ENCODE measurements at regions of chr20 and their contacts with region 1.

Region 1: GRCh38 chr20:40880063-40880728 is 148.4 kb upstream of the TOP1 start:
- DNase-seq: no peak
- H3K4me3 Mint-ChIP-seq: no peak overlapping the region
- H3K27ac Mint-ChIP-seq: no peak overlapping the region
- H3K4me1 Mint-ChIP-seq: peaks cover 32% of the 10 kb centered on the region
- H3K27me3 Mint-ChIP-seq: peaks cover 4% of the 10 kb centered on the region

Region 2: DNA sequence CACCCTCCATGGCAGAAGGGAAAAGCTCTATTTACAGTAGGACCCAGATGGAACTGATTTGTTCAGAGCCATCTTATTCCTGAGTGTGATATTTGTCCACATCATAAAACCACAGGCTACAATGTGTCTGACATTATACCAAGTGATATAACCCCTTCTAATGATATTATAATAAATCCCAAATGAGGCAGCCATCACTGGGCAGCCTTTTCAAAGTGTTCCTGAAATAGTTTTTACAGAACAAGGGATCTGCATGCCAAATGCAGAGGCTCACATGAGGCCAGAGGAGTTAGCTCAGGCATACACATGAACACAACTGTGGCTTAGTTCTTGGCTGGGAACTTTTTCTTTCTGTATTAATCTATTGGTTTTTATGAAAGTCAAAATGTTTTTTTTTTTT is 398.9 kb before region 1 on chr20:
- intact Hi-C with region 1: no loop called
- DNase-seq: no peak
- H3K4me3 Mint-ChIP-seq: no peak overlapping the region
- H3K27ac Mint-ChIP-seq: no peak overlapping the region
- H3K4me1 Mint-ChIP-seq: no peaks in the 10 kb centered on the region
- H3K27me3 Mint-ChIP-seq: no peaks in the 10 kb centered on the region

Region 3: GRCh38 chr20:40741507-40742106 is 138.6 kb before region 1 on chr20:
- intact Hi-C with region 1: loop called (anchors 10 kb)
- DNase-seq: peak; percentile 19
- H3K4me3 Mint-ChIP-seq: no peak overlapping the region
- H3K27ac Mint-ChIP-seq: no peak overlapping the region
- H3K4me1 Mint-ChIP-seq: no peaks in the 10 kb centered on the region
- H3K27me3 Mint-ChIP-seq: peaks cover 14% of the 10 kb centered on the region